ENCODE measurements at regions of chr5 and their contacts with region 1.

Region 1: DNA sequence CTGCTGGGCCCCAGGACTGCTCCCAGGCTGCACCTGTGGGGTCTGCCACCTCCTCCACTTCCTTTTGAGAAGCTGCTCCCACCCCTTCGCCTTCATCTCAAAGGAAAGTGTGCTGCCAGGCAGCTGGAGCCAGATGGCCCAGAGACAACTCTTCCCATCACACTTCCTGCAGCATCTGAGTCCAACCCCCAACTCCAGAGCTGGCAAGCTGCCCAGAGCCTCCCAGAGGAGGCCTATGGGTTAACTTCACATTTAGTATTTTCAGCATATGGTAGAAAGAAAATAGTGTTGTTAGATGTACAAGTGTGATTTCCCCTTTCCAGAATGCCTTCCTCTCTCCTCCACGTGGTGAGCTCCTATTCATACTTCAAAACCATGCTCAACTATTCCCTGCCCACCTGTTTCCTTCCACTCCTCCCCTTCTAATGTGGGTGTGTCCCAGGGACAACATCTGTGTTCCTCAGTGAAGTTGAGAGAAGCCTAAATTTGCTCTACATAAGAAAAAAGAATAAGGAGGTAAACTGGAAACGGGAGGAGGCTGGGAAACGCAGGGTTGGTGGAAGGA is 38.6 kb upstream of the KCNMB1 start:
- DNase-seq: no peak
- H3K4me3 ChIP-seq: no peak overlapping the region
- H3K4me3 Mint-ChIP-seq: no peak overlapping the region
- H3K27ac ChIP-seq: no peak overlapping the region
- H3K27ac Mint-ChIP-seq: no peak overlapping the region
- H3K4me1 ChIP-seq: no peaks in the 10 kb centered on the region
- H3K4me1 Mint-ChIP-seq: no peaks in the 10 kb centered on the region
- H3K27me3 ChIP-seq: no peaks in the 10 kb centered on the region
- H3K27me3 Mint-ChIP-seq: peaks cover 10 to 11% of the 10 kb centered on the region in 2 donors

Region 2: GRCh38 chr5:170440771-170441392 is 13.1 kb after region 1 on chr5:
- CTCF ChIA-PET with region 1: interaction called, 23 read pairs
- POLR2A ChIA-PET with region 1: no interaction called
- intact Hi-C with region 1: no loop called
- DNase-seq: no peak
- H3K4me3 ChIP-seq: no peak overlapping the region
- H3K4me3 Mint-ChIP-seq: no peak overlapping the region
- H3K27ac ChIP-seq: no peak overlapping the region
- H3K27ac Mint-ChIP-seq: no peak overlapping the region
- H3K4me1 ChIP-seq: no peaks in the 10 kb centered on the region
- H3K4me1 Mint-ChIP-seq: peaks cover 0 to 2% (median 0%) of the 10 kb centered on the region in 4 donors
- H3K27me3 ChIP-seq: no peaks in the 10 kb centered on the region
- H3K27me3 Mint-ChIP-seq: peaks cover 0 to 2% of the 10 kb centered on the region in 2 donors

Region 3: GRCh38 chr5:170534177-170534576 is 106.4 kb after region 1 on chr5:
- CTCF ChIA-PET with region 1: no interaction called
- POLR2A ChIA-PET with region 1: no interaction called
- intact Hi-C with region 1: no loop called
- DNase-seq: no peak
- H3K4me3 ChIP-seq: no peak overlapping the region
- H3K4me3 Mint-ChIP-seq: no peak overlapping the region
- H3K27ac ChIP-seq: no peak overlapping the region
- H3K27ac Mint-ChIP-seq: peak overlapping the region in 1 of 7 donors; percentile 38
- H3K4me1 ChIP-seq: no peaks in the 10 kb centered on the region
- H3K4me1 Mint-ChIP-seq: peaks cover 0 to 2% (median 0%) of the 10 kb centered on the region in 4 donors
- H3K27me3 ChIP-seq: no peaks in the 10 kb centered on the region
- H3K27me3 Mint-ChIP-seq: peaks cover 3 to 26% of the 10 kb centered on the region in 2 donors

Measured in CD4-positive, alpha-beta memory T cell (primary cell).